Mammary epithelial cell (primary cell): ENCODE measurements at regions of chr2 and their contacts with region 1.

Region 1: GRCh38 chr2:66574701-66575624 is 140.0 kb downstream of the MEIS1 start:
- DNase-seq: peak; percentile 66
- H3K4me3 ChIP-seq: peak overlapping the region; percentile 54 to 80 (median 55)
- H3K27ac ChIP-seq: no peak overlapping the region
- H3K4me1 ChIP-seq: peaks cover 23% of the 10 kb centered on the region
- H3K27me3 ChIP-seq: peaks cover 25% of the 10 kb centered on the region
- CTCF ChIP-seq: peak; percentile 44 to 67

Region 2: DNA sequence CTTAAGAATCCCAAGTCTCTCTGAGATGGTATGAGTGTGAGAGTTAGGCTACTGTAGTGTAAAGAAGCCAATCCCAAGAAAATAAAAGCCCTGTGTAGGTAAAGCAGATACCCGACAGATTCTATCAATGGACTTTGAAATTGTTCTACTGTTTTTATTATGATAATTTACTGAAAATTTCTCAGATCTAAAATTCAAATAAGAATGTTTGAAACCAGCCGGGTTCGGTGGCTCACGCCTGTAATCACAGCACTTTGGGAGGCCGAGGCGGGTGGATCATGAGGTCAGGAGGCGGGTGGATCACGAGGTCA is 934.2 kb before region 1 on chr2:
- CTCF ChIA-PET with region 1: no interaction called
- dilution Hi-C with region 1: no loop called
- in situ Hi-C with region 1: no loop called
- intact Hi-C with region 1: loop called (anchors 1 kb)
- DNase-seq: no peak
- H3K4me3 ChIP-seq: no peak overlapping the region
- H3K27ac ChIP-seq: no peak overlapping the region
- H3K4me1 ChIP-seq: peaks cover 11% of the 10 kb centered on the region
- H3K27me3 ChIP-seq: peaks cover 3% of the 10 kb centered on the region
- CTCF ChIP-seq: no peak

Region 3: GRCh38 chr2:65918760-65919187 is 656.2 kb before region 1 on chr2:
- CTCF ChIA-PET with region 1: no interaction called
- dilution Hi-C with region 1: no loop called
- in situ Hi-C with region 1: no loop called
- intact Hi-C with region 1: loop called (anchors 2 kb)
- DNase-seq: no peak
- H3K4me3 ChIP-seq: no peak overlapping the region
- H3K27ac ChIP-seq: no peak overlapping the region
- H3K4me1 ChIP-seq: no peaks in the 10 kb centered on the region
- H3K27me3 ChIP-seq: no peaks in the 10 kb centered on the region
- CTCF ChIP-seq: peak in 1 of 2 donors; percentile 22

Region 4: GRCh38 chr2:66495788-66496640 is 78.9 kb before region 1 on chr2:
- CTCF ChIA-PET with region 1: no interaction called
- dilution Hi-C with region 1: no loop called
- in situ Hi-C with region 1: no loop called
- intact Hi-C with region 1: no loop called
- DNase-seq: peak; percentile 85
- H3K4me3 ChIP-seq: peak overlapping the region in 1 of 3 experiments; percentile 13
- H3K27ac ChIP-seq: peak overlapping the region; percentile 81
- H3K4me1 ChIP-seq: peaks cover 21% of the 10 kb centered on the region
- H3K27me3 ChIP-seq: no peaks in the 10 kb centered on the region
- CTCF ChIP-seq: peak in 1 of 2 donors; percentile 59

Region 5: DNA sequence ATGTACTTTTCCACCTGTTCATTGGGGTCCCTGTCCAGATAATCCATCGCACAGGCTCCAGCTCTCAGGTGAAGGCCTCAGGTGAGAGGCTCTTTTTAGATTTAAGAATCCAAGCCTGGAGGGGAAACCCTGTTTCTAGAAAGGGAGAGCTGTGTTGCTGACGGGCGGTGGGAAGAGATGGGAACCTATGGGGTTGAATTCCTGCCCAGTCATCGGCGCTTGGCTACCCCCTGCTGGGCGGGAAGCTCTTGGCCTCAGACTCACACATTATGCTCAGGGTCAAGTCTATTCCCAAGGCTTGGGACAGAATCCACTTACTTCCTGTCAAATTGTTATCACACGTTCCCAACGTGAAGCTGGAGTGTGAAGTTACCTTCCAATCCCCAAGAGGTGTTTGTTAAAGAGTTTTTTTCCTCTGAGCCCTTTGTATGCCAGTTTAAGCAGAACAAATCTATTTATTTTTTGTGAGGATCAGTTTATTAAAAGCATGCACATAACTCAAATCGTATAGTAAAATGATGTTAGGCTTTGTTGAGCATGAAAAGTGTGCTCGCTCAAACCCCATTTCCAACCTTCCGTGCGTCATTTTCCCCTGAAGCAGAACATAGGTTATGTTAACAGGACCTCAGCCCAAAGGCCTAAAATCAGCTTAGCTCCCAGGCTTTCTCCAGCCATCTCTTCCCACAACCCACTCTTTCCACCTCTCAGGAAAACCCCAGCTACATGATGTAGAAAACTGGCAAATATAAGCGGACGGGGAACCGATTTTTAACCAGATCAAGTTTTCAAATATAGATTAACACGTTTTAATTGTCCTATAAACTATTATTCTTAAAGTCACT is 640.5 kb after region 1 on chr2:
- CTCF ChIA-PET with region 1: no interaction called
- dilution Hi-C with region 1: no loop called
- in situ Hi-C with region 1: no loop called
- intact Hi-C with region 1: loop called (anchors 1 kb)
- DNase-seq: peak; percentile 46
- H3K4me3 ChIP-seq: no peak overlapping the region
- H3K27ac ChIP-seq: no peak overlapping the region
- H3K4me1 ChIP-seq: no peaks in the 10 kb centered on the region
- H3K27me3 ChIP-seq: no peaks in the 10 kb centered on the region
- CTCF ChIP-seq: peak; percentile 49 to 71

Region 6: DNA sequence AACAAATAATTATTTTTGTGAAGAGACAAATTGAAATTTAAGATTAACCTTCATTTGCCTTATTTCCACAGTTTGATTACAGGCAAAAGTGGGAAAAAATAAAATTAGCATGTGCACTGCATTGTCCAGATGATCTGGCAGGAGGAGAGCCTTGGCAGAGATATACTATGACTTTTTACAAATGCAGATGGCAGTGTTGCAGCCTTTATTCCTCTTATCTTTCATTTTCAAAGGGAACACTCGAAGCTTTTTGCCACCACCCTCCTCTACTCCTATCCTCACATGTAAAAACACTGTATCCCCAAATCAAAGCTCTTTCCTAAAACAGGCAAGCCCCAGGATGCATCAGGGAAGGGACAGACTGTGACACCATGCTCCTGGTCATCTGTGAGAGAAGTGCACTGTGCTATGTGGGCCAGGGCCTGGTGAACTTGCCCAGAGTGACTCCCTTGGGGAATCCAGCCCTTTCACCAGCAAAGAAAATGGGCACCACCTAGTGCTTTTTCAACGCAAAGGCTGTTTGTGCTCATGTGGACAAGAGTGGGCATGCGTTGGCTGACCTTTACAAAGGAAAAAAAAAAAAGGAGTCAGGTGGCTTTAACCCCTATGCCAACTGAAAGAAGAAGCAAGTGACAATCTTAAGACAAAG is 747.5 kb after region 1 on chr2:
- CTCF ChIA-PET with region 1: no interaction called
- dilution Hi-C with region 1: no loop called
- in situ Hi-C with region 1: loop called in 1 of 2 experiments (anchors 25 kb)
- intact Hi-C with region 1: loop called (anchors 2 kb)
- DNase-seq: peak; percentile 73
- H3K4me3 ChIP-seq: no peak overlapping the region
- H3K27ac ChIP-seq: no peak overlapping the region
- H3K4me1 ChIP-seq: peaks cover 3% of the 10 kb centered on the region
- H3K27me3 ChIP-seq: no peaks in the 10 kb centered on the region
- CTCF ChIP-seq: peak; percentile 82 to 87

Region 7: GRCh38 chr2:67650291-67651133 is 1075.5 kb after region 1 on chr2:
- CTCF ChIA-PET with region 1: no interaction called
- dilution Hi-C with region 1: no loop called
- in situ Hi-C with region 1: no loop called
- intact Hi-C with region 1: loop called (anchors 5 kb)
- DNase-seq: peak; percentile 67
- H3K4me3 ChIP-seq: no peak overlapping the region
- H3K27ac ChIP-seq: no peak overlapping the region
- H3K4me1 ChIP-seq: peaks cover 8% of the 10 kb centered on the region
- H3K27me3 ChIP-seq: no peaks in the 10 kb centered on the region
- CTCF ChIP-seq: peak; percentile 80 to 91